WTC11 (cell line): ENCODE measurements at regions of chr15 and their contacts with region 1.

Region 1: DNA sequence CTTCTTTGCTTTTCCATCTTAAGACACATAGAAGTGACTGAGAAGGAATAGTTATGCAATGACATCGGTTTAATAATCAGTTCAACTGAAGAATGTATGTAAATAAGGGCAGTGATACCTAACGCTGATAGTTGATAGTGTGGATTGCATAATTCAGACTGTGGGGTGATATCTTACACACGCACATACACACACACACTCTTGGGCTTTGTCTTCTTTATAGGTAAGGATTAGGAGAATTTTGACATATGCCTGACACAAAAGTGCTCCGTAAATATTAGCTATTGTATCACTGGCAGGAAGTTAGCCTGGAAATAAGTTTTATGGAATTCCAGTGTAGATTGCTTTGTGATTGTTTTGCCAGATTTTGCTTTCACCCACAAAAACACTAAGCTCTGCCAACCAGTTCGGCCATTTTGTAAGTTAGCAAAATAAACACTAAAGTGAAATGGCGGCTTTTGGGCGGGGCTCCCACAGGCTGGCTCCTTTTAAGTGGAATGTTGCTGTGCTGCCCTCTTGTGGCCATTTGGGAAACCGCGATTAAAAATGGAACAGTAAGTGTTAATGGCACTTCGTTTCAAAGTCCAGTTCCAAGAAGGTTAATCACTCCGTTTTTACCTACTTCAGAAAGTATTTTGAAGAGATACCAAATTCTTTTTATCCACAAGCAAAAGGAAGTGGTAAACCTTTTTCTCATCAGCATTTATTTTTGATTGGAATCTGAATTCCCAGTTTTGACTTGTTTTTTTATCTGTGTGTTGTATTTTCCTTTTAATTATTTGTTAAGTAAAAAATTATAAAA is 17.7 kb downstream of the CHD2 start:
- DNase-seq: peak; percentile 94
- ATAC-seq: peak; percentile 17
- H3K4me3 Mint-ChIP-seq: no peak overlapping the region
- H3K27ac Mint-ChIP-seq: peak overlapping the region; percentile 98
- H3K4me1 Mint-ChIP-seq: peaks cover 85% of the 10 kb centered on the region
- H3K27me3 Mint-ChIP-seq: peaks cover 2% of the 10 kb centered on the region; the same call in 1 of the 2 replicates
- CTCF ChIP-seq: peak; percentile 74

Region 2: GRCh38 chr15:92797168-92797951 is 120.4 kb before region 1 on chr15:
- CTCF ChIA-PET with region 1: interaction called, 21 read pairs
- POLR2A ChIA-PET with region 1: no interaction called
- DNase-seq: no peak
- ATAC-seq: peak; percentile 82
- H3K4me3 Mint-ChIP-seq: no peak overlapping the region
- H3K27ac Mint-ChIP-seq: peak overlapping the region; percentile 93
- H3K4me1 Mint-ChIP-seq: peaks cover 8% of the 10 kb centered on the region
- H3K27me3 Mint-ChIP-seq: no peaks in the 10 kb centered on the region
- CTCF ChIP-seq: peak; percentile 56